Ovary (tissue), 10 donors: ENCODE measurements at regions of chr7 and their contacts with region 1.

Region 1: DNA sequence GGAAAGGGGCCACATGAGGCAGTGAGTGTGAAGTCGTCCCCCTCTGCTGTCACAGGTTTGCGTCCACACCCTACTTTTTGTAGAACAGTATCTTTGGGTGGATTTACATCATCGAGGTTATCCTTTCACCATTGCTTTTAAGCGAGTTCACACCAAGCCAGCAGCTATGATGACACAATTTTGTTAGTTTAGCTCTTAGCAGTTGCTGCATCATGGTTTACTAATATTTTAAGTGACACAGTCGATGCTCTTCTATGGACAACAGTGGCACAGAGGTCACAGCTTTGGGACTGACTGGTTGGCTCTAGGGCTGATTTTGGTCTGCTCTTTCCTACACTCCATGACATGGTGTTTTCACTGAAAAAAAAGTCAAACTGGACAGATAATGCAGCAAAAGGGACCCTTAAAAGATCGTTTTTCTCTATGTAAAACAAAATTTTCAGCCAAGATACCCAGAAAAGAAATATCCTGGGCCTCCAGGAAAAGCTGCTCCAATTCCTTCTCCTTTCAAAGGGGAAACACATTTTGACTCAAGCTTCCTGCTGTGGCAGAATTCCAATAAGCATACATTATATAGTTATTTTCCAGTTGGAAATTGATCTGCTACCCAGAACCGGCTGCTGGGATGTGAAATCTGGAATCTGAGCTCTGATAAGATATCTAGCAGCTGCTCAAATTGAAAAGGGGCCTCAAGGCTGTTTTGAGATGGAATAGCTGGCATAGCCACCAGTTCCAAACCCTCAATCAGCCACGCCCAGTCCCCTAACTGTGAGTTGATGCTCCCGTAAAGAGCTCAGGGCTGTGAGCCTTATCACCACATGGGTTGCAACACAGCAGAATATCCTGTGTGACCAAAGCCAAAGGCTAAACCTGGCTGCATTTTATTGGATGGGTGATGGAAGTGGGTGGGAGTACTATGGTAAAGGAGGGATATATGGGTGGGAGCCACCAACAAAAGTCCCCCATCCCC is 114.2 kb downstream of the SMURF1 start:
- DNase-seq: peak in 1 of 5 donors; percentile 17
- H3K4me3 ChIP-seq: no peak overlapping the region
- H3K27ac ChIP-seq: no peak overlapping the region
- H3K4me1 ChIP-seq: no peaks in the 10 kb centered on the region
- H3K27me3 ChIP-seq: no peaks in the 10 kb centered on the region
- CTCF ChIP-seq: no peak
- EP300 ChIP-seq: no peak
- POLR2A ChIP-seq: no peak

Region 2: GRCh38 chr7:99106821-99107241 is 77.1 kb after region 1 on chr7:
- intact Hi-C with region 1: loop called in 1 of 4 experiments (anchors 2 kb)
- DNase-seq: no peak
- H3K4me3 ChIP-seq: no peak overlapping the region
- H3K27ac ChIP-seq: peak overlapping the region; percentile 2 to 58
- H3K4me1 ChIP-seq: peaks cover 19% of the 10 kb centered on the region
- H3K27me3 ChIP-seq: no peaks in the 10 kb centered on the region
- CTCF ChIP-seq: no peak
- EP300 ChIP-seq: no peak
- POLR2A ChIP-seq: no peak